ENCODE measurements at regions of chr9 and their contacts with region 1.

Region 1: GRCh38 chr9:127347831-127348779 is 48.9 kb upstream of the SLC2A8 start:
- DNase-seq: peak; percentile 28
- ATAC-seq: peak; percentile 74
- H3K4me3 ChIP-seq: no peak overlapping the region
- H3K27ac ChIP-seq: no peak overlapping the region
- H3K4me1 ChIP-seq: no peaks in the 10 kb centered on the region
- H3K27me3 ChIP-seq: no peaks in the 10 kb centered on the region
- CTCF ChIP-seq: peak; percentile 54
- EP300 ChIP-seq: no peak
- POLR2A ChIP-seq: no peak
- RAD21 ChIP-seq: no peak

Region 2: GRCh38 chr9:127214421-127215267 is 133.5 kb before region 1 on chr9:
- CTCF ChIA-PET with region 1: no interaction called
- POLR2A ChIA-PET with region 1: no interaction called
- in situ Hi-C with region 1: loop called (anchors 5 kb)
- intact Hi-C with region 1: loop called (anchors 2 kb)
- DNase-seq: peak; percentile 69
- ATAC-seq: peak; percentile 67
- H3K4me3 ChIP-seq: no peak overlapping the region
- H3K27ac ChIP-seq: no peak overlapping the region
- H3K4me1 ChIP-seq: peaks cover 24% of the 10 kb centered on the region
- H3K27me3 ChIP-seq: peaks cover 0 to 2% of the 10 kb centered on the region in 2 experiments; a peak in 1 of 5 replicates
- CTCF ChIP-seq: peak; percentile 84
- EP300 ChIP-seq: no peak
- POLR2A ChIP-seq: no peak
- RAD21 ChIP-seq: peak; percentile 78